Common myeloid progenitor, CD34-positive (primary cell): ENCODE measurements at regions of chr12 and their contacts with region 1.

Region 1: DNA sequence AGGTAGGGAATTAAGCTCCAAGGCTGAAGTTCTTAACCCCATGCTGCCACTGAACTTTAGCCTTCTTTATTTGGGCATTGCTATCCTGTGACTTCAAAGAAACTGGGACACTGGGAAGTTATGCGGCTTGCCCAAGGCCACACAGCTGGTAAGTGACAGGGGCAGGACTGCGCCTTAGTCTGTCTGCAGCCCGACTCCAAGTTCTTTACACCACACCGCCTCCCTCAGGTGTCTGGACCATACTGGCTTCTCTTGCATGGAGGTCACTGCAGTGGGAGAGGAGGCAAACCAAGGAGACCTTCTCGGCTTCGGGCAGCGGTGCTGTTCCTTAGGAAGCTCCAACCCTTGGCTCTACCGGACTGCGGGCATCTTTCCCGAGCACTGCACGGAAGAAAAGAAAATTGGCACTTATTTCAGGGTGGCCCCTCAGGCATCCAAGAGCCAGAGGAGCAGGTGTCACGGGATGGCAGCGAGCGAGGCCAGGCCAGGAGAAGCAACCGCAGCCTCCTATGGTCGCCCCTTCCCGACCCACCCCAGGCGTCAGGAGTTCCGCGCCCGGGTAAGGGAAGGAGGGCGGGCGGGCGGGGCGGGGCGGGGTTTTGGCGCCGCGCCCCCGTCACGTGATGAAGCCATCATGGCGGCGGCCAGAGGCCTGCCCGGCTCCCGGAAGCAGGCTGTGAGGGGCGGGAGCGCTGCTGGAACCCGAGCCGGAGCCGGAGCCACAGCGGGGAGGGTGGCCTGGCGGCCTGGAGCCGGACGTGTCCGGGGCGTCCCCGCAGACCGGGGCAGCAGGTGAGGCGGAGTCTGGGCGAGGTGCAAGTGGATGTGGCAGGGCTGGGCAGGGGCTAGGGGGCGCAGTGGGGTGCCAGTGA is 16.4 kb upstream of the ESPL1 start:
- DNase-seq: peak; percentile 56 to 69 (median 63)
- H3K4me3 ChIP-seq: peak overlapping the region; percentile 59 to 92 (median 85)
- H3K27ac ChIP-seq: peak overlapping the region; percentile 50 to 81
- H3K4me1 ChIP-seq: peaks cover 2 to 46% (median 24%) of the 10 kb centered on the region in 4 experiments
- H3K27me3 ChIP-seq: no peaks in the 10 kb centered on the region

Region 2: DNA sequence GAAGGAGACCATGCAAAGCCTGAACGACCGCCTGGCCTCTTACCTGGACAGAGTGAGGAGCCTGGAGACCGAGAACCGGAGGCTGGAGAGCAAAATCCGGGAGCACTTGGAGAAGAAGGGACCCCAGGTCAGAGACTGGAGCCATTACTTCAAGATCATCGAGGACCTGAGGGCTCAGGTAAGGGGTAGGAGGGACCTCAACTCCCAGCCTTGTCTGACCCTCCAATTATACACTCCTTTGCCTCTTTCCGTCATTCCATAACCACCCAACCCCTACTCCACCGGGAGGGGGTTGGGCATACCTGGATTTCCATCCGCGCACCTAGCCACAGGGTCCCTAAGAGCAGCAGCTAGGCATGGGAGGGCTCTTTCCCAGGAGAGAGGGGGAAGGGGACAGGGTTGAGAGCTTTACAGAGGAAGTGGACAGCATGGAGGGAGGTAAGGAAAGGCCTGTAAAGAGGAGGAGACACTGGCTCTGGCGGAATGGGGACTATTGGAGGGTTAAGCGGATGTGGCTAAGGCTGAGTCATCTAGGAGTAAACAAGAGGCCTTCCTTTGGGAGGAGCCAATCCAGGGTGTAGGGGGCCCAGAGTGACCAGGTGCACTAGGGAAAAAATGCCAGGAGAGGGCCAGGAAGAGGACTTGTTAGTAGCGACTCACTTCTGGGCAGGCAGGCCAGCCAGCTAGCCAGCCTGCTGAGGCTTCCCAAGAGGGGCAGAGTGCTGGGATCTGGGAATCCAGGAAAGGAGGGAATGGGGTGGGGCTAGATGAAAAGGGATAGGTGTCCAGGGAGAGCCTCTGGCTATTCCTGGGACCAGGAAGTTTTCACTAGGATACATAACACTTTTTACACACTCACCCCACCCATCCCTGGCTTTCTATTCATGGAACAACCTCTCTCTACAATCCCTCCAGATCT is 302.0 kb before region 1 on chr12:
- CTCF ChIA-PET with region 1: no interaction called
- POLR2A ChIA-PET with region 1: no interaction called
- DNase-seq: peak in 2 of 3 donors; percentile 48 to 61
- H3K4me3 ChIP-seq: peak overlapping the region in 6 of 7 experiments; percentile 5 to 84 (median 67)
- H3K27ac ChIP-seq: peak overlapping the region; percentile 33 to 83
- H3K4me1 ChIP-seq: peaks cover 0 to 20% (median 3%) of the 10 kb centered on the region in 4 experiments
- H3K27me3 ChIP-seq: peaks cover 0 to 12% (median 0%) of the 10 kb centered on the region in 5 experiments

Region 3: DNA sequence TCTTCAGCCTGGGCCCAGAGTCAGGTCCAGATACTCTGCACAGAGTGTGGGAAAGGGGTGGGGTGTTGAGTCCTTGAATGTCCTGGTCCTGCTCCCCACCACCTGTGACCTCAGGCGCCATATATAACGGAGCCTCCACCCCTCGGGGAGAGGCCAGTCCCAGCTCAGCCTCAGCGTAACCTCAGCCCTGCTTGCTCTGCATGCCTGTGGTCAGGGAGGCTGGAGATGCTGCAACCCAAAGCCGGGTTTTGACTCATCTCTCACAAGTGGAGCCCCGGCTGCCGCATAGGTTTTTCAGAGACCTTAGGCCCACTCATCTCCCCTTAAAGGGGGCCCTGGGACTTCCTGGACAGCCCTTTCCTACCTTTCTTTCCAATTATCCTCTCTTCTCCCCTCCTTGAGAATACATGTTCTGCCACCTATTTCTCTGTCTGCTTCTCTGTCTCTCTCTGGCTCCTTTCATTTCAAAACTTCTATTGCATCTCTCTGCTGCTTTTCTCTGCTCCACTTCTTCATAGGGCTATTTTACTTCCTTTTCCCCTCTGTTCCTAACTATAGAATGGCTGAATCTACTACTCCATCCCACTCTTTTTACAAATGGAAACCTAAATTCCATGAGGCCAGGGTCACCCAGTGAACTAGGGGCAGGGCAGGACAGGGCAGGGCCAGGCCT is 45.8 kb before region 1 on chr12:
- CTCF ChIA-PET with region 1: interaction called, 299 read pairs
- POLR2A ChIA-PET with region 1: no interaction called
- DNase-seq: no peak
- H3K4me3 ChIP-seq: no peak overlapping the region
- H3K27ac ChIP-seq: no peak overlapping the region
- H3K4me1 ChIP-seq: peaks cover 12 to 64% (median 40%) of the 10 kb centered on the region in 4 experiments
- H3K27me3 ChIP-seq: no peaks in the 10 kb centered on the region

Region 4: GRCh38 chr12:53213348-53213747 is 38.4 kb before region 1 on chr12:
- CTCF ChIA-PET with region 1: interaction called, 299 read pairs
- POLR2A ChIA-PET with region 1: interaction called, 3 read pairs
- DNase-seq: peak; percentile 78 to 86 (median 82)
- H3K4me3 ChIP-seq: no peak overlapping the region
- H3K27ac ChIP-seq: no peak overlapping the region
- H3K4me1 ChIP-seq: peaks cover 2 to 65% (median 55%) of the 10 kb centered on the region in 4 experiments
- H3K27me3 ChIP-seq: no peaks in the 10 kb centered on the region